CD8-positive, alpha-beta memory T cell (primary cell): ENCODE measurements at regions of chr1 and their contacts with region 1.

Region 1: GRCh38 chr1:21255278-21255942 is 34.9 kb downstream of the ECE1 start:
- DNase-seq: peak; percentile 69 to 89 (median 73)
- H3K4me3 ChIP-seq: no peak overlapping the region
- H3K4me3 Mint-ChIP-seq: peak overlapping the region in 1 of 7 donors; percentile 37
- H3K27ac ChIP-seq: no peak overlapping the region
- H3K27ac Mint-ChIP-seq: peak overlapping the region; percentile 4 to 89 (median 64)
- H3K4me1 ChIP-seq: peaks cover 20% of the 10 kb centered on the region
- H3K4me1 Mint-ChIP-seq: peaks cover 33 to 38% (median 33%) of the 10 kb centered on the region in 3 donors
- H3K27me3 ChIP-seq: no peaks in the 10 kb centered on the region
- H3K27me3 Mint-ChIP-seq: no peaks in the 10 kb centered on the region

Region 2: GRCh38 chr1:21232044-21232443 is 23.4 kb before region 1 on chr1:
- CTCF ChIA-PET with region 1: interaction called, 32 read pairs
- POLR2A ChIA-PET with region 1: no interaction called
- DNase-seq: peak in 3 of 5 donors; percentile 9 to 37 (median 22)
- H3K4me3 ChIP-seq: no peak overlapping the region
- H3K4me3 Mint-ChIP-seq: no peak overlapping the region
- H3K27ac ChIP-seq: no peak overlapping the region
- H3K27ac Mint-ChIP-seq: peak overlapping the region in 1 of 8 donors; percentile 31
- H3K4me1 ChIP-seq: no peaks in the 10 kb centered on the region
- H3K4me1 Mint-ChIP-seq: no peaks in the 10 kb centered on the region
- H3K27me3 ChIP-seq: no peaks in the 10 kb centered on the region
- H3K27me3 Mint-ChIP-seq: no peaks in the 10 kb centered on the region

Region 3: GRCh38 chr1:21280011-21280471 is 24.6 kb after region 1 on chr1:
- CTCF ChIA-PET with region 1: interaction called, 11 read pairs
- POLR2A ChIA-PET with region 1: no interaction called
- DNase-seq: peak in 3 of 5 donors; percentile 15 to 20 (median 16)
- H3K4me3 ChIP-seq: peak overlapping the region; percentile 33
- H3K4me3 Mint-ChIP-seq: peak overlapping the region; percentile 9 to 84 (median 73)
- H3K27ac ChIP-seq: peak overlapping the region; percentile 12
- H3K27ac Mint-ChIP-seq: peak overlapping the region; percentile 83 to 97 (median 94)
- H3K4me1 ChIP-seq: peaks cover 33% of the 10 kb centered on the region
- H3K4me1 Mint-ChIP-seq: peaks cover 45 to 59% (median 46%) of the 10 kb centered on the region in 3 donors
- H3K27me3 ChIP-seq: no peaks in the 10 kb centered on the region
- H3K27me3 Mint-ChIP-seq: no peaks in the 10 kb centered on the region

Region 4: DNA sequence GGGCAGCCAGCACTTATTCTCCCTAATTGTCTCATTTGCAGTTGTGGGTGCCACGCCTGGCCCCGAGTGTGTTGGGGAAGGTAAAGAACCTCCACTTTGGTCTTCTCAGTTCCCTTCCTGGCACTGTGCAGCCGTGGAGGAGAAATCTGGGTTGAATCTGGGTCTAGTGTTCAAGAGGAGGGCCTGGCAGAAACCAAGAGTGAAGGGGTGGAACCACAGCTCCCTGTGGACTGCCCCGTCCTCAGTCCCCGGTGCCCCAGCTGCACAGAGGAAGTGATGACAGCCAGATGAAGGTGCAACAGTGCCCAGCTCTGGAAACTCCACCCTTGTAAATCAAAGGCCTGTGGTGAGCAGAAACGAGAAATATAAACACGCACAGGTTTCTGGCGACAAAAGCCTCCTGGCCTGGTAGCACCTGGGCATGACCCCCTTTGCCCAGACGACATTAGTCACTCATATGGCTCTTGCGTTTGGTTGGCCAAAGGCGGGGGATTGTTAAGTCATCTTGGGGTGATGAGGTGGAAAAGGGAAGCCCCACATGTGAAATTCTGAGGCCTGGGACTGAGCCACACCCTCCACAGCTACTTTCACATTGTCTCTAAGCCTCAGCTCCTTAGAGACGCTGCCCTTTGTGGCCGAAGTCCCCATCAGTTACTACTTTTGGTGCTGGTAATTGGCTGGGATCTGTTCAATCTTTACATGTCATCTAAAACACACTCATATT is 39.0 kb after region 1 on chr1:
- CTCF ChIA-PET with region 1: interaction called, 34 read pairs
- POLR2A ChIA-PET with region 1: interaction called, 8 read pairs
- DNase-seq: peak; percentile 77 to 97 (median 90)
- H3K4me3 ChIP-seq: peak overlapping the region; percentile 78
- H3K4me3 Mint-ChIP-seq: peak overlapping the region; percentile 86 to 97 (median 92)
- H3K27ac ChIP-seq: peak overlapping the region; percentile 77
- H3K27ac Mint-ChIP-seq: peak overlapping the region; percentile 97 to 100 (median 99)
- H3K4me1 ChIP-seq: peaks cover 82% of the 10 kb centered on the region
- H3K4me1 Mint-ChIP-seq: peaks cover 71 to 90% (median 90%) of the 10 kb centered on the region in 3 donors
- H3K27me3 ChIP-seq: no peaks in the 10 kb centered on the region
- H3K27me3 Mint-ChIP-seq: peaks cover 0 to 2% of the 10 kb centered on the region in 2 donors

Region 5: GRCh38 chr1:21324368-21325141 is 69.1 kb after region 1 on chr1:
- CTCF ChIA-PET with region 1: interaction called, 15 read pairs
- POLR2A ChIA-PET with region 1: no interaction called
- DNase-seq: peak in 4 of 5 donors; percentile 22 to 62 (median 44)
- H3K4me3 ChIP-seq: peak overlapping the region; percentile 16
- H3K4me3 Mint-ChIP-seq: peak overlapping the region; percentile 38 to 91 (median 79)
- H3K27ac ChIP-seq: no peak overlapping the region
- H3K27ac Mint-ChIP-seq: peak overlapping the region; percentile 82 to 95 (median 91)
- H3K4me1 ChIP-seq: peaks cover 61% of the 10 kb centered on the region
- H3K4me1 Mint-ChIP-seq: peaks cover 47 to 81% (median 73%) of the 10 kb centered on the region in 3 donors
- H3K27me3 ChIP-seq: no peaks in the 10 kb centered on the region
- H3K27me3 Mint-ChIP-seq: no peaks in the 10 kb centered on the region

Region 6: DNA sequence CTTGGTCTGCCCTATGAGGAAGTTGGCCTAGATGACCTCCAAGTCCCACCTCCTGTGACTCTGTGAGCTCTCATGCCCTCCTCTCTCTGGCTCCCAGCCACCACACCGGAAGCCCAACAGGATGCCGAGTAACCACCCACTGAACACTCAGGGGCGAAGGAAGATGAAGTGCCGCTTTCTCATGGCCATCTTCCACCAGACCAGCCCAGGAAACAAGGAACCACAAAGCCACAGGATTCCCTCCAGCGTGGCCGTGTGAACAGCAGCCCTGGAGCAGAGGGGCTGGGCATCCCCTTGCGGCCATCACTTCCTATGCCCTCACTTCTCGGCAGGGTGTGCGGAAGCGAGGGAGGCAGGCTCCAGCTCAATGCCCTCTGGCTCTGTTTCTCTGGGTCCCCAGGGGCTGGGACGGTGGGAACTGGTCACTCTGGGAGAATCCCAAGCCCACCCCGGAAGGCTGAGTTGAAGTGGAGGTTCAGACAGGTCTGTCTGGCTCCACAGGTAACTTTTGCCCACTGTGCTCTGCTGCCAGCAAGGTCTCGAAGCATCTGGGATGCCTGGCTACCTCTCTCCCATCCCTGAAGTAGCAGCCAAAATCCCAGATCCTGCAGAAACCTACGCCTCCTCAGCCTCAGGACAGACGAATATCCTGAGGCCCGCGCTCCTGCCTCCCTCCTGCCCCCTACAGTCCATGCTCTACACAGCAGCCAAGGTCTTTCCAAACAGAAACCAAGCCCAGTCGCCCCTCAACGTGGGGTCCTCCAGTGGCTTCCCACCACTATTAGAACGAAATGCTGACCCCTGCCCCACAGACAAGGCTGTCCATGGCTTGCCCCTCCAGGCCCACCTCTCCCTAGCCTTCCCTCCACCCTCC is 79.0 kb after region 1 on chr1:
- CTCF ChIA-PET with region 1: interaction called, 21 read pairs
- POLR2A ChIA-PET with region 1: no interaction called
- DNase-seq: peak; percentile 74 to 91 (median 90)
- H3K4me3 ChIP-seq: peak overlapping the region; percentile 51
- H3K4me3 Mint-ChIP-seq: peak overlapping the region; percentile 76 to 91 (median 87)
- H3K27ac ChIP-seq: peak overlapping the region; percentile 69
- H3K27ac Mint-ChIP-seq: peak overlapping the region; percentile 91 to 99 (median 98)
- H3K4me1 ChIP-seq: peaks cover 84% of the 10 kb centered on the region
- H3K4me1 Mint-ChIP-seq: peaks cover 66 to 89% (median 84%) of the 10 kb centered on the region in 3 donors
- H3K27me3 ChIP-seq: no peaks in the 10 kb centered on the region
- H3K27me3 Mint-ChIP-seq: no peaks in the 10 kb centered on the region

Region 7: DNA sequence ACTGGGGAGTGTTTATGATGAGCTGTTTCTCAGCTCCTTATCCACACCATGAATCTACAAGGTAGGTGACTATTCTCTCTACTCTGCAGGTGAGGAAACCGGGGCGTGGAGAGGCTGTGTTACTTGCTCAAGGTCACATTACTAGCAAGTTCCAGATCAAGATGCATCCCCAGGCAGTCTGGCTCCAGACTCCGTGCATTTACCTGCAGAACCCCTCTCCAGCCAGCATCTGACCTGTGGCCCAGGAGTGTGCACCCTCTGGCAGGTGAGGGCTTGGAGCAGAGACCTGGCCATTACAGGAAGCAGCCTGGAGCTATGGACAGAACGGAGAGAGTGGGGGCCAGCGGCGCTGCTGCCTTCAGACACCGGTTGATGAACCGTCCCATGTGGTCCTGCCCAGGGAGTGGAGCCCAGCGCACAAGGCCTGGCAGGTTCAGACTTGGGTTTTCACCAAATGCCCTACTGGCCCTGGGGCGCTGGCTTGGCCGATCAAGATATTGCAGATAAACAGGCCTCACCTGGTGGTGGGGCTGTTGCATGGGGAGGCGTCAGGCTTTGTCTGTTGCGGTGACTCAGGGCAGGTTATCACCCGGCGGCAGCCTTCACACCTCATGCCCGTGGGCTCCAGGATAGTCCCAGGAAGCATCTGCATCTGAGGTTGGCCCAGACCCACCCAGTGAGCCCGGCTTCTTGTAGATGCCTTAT is 916.7 kb after region 1 on chr1:
- CTCF ChIA-PET with region 1: no interaction called
- POLR2A ChIA-PET with region 1: no interaction called
- DNase-seq: no peak
- H3K4me3 ChIP-seq: no peak overlapping the region
- H3K4me3 Mint-ChIP-seq: no peak overlapping the region
- H3K27ac ChIP-seq: no peak overlapping the region
- H3K27ac Mint-ChIP-seq: no peak overlapping the region
- H3K4me1 ChIP-seq: no peaks in the 10 kb centered on the region
- H3K4me1 Mint-ChIP-seq: no peaks in the 10 kb centered on the region
- H3K27me3 ChIP-seq: no peaks in the 10 kb centered on the region
- H3K27me3 Mint-ChIP-seq: peaks cover 5 to 19% of the 10 kb centered on the region in 2 donors